AG04449 (cell line): ENCODE measurements at regions of chr4 and their contacts with region 1.

Region 1: DNA sequence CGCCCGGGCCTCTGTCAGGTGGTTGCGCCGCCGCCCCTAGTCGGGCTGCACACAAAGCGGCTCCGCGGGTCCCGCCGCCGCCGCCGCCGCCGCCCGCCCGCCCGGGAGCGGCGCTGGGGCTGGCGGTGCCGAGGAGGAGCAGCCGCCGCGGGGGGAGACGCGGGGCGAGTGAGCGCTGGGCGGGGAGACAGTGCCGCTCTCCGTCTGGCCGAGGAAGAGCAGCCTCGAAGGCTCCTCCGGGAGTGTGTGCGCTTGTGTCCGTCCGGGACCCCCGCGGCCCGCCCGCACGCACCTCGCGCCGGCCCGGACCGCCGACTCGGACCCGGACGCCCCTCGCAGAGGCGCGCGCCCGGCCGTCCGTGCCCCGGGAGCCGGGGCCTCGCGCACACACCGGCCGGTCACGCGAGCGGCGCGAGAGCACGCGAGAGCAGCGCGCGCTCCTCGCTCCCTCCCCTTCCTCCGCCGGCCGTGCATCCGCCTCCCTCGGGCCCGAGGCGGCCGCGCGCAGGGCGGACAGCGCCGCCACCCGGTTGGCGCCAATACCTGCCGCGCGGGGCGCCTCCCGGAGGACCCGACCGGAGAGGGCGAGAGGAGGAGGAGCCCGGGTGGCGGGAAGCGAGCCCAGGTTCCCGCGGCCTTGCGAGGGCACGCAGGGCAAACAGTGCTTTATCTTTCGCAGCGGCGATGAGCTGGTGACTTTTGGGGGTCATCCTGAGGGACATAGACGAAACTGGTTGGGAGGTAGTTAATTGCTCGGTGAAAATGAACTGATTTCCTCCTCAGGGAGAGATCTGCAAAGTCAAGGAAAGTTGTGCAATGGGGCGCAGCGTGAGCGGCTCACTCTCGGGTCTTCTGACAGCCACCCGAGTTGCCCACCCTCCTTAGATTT is at the start of gene PDS5A:
- DNase-seq: no peak
- H3K4me3 ChIP-seq: peak within 1 kb of the TSS; percentile 80
- CTCF ChIP-seq: peak; percentile 86

Region 2: DNA sequence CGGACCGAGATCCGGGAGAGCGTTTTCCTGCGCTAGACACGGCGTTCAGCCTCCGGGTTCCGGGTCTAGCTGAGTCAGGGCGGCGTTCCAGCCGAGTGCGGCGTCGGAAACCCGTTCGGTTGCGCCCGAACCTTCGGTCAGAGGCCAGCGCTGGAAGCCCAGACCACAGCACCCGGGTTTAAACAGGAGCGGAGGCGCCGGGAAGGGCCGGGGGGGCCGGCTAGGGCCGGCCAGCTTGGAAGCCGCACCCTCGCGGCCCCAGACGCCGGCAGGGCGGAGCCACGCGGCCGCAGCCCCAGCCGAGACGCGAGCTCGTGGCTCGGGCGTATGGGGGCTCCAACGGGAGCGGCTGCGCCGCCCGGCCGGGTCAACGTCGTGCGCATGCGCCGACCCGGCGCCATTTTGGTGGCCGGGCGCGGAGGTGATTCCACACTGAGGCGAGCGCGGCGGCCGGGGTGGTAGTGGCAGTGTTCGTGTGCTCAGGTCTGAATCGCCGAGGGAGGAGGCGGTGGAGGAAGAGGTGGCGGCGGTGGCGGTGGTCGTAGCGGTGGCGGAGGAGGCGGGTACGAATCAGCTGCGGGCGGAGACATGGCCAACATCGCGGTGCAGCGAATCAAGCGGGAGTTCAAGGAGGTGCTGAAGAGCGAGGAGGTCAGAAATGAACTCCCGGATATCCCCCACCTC is 279.9 kb before region 1 on chr4 and contains the start of gene UBE2K:
- CTCF ChIA-PET with region 1: interaction called, 35 read pairs
- POLR2A ChIA-PET with region 1: no interaction called
- DNase-seq: no peak
- H3K4me3 ChIP-seq: peak within 1 kb of the TSS; percentile 97
- CTCF ChIP-seq: no peak

Region 3: GRCh38 chr4:39881789-39882188 is 95.9 kb before region 1 on chr4:
- CTCF ChIA-PET with region 1: no interaction called
- POLR2A ChIA-PET with region 1: no interaction called
- DNase-seq: no peak
- H3K4me3 ChIP-seq: no peak overlapping the region
- CTCF ChIP-seq: no peak

Region 4: GRCh38 chr4:39937683-39938268 is 40.0 kb before region 1 on chr4:
- CTCF ChIA-PET with region 1: interaction called, 16 read pairs
- POLR2A ChIA-PET with region 1: no interaction called
- DNase-seq: no peak
- H3K4me3 ChIP-seq: no peak overlapping the region
- CTCF ChIP-seq: no peak

Region 5: GRCh38 chr4:39963656-39964055 is 14.1 kb before region 1 on chr4:
- CTCF ChIA-PET with region 1: interaction called, 23 read pairs
- POLR2A ChIA-PET with region 1: no interaction called
- DNase-seq: no peak
- H3K4me3 ChIP-seq: no peak overlapping the region
- CTCF ChIP-seq: no peak

Region 6: GRCh38 chr4:39994406-39994805 is 16.7 kb after region 1 on chr4:
- CTCF ChIA-PET with region 1: interaction called, 28 read pairs
- POLR2A ChIA-PET with region 1: interaction called, 3 read pairs
- DNase-seq: no peak
- H3K4me3 ChIP-seq: no peak overlapping the region
- CTCF ChIP-seq: no peak

Region 7: GRCh38 chr4:40056716-40057585 is 79.2 kb after region 1 on chr4 and contains the start of gene N4BP2:
- CTCF ChIA-PET with region 1: interaction called, 10 read pairs
- POLR2A ChIA-PET with region 1: interaction called, 3 read pairs
- DNase-seq: no peak
- H3K4me3 ChIP-seq: peak within 1 kb of the TSS; percentile 80
- CTCF ChIP-seq: peak; percentile 88